ENCODE measurements at regions of chr6 and their contacts with region 1.

Region 1: GRCh38 chr6:30821862-30822782 is 62.2 kb upstream of the DDR1 start:
- DNase-seq: no peak
- H3K4me3 ChIP-seq: no peak overlapping the region
- H3K27ac ChIP-seq: peak overlapping the region; percentile 27 to 92 (median 84)
- H3K4me1 ChIP-seq: peaks cover 44 to 76% (median 57%) of the 10 kb centered on the region in 3 donors
- H3K27me3 ChIP-seq: no peaks in the 10 kb centered on the region
- CTCF ChIP-seq: peak; percentile 21 to 67 (median 44)
- POLR2A ChIP-seq: no peak

Region 2: DNA sequence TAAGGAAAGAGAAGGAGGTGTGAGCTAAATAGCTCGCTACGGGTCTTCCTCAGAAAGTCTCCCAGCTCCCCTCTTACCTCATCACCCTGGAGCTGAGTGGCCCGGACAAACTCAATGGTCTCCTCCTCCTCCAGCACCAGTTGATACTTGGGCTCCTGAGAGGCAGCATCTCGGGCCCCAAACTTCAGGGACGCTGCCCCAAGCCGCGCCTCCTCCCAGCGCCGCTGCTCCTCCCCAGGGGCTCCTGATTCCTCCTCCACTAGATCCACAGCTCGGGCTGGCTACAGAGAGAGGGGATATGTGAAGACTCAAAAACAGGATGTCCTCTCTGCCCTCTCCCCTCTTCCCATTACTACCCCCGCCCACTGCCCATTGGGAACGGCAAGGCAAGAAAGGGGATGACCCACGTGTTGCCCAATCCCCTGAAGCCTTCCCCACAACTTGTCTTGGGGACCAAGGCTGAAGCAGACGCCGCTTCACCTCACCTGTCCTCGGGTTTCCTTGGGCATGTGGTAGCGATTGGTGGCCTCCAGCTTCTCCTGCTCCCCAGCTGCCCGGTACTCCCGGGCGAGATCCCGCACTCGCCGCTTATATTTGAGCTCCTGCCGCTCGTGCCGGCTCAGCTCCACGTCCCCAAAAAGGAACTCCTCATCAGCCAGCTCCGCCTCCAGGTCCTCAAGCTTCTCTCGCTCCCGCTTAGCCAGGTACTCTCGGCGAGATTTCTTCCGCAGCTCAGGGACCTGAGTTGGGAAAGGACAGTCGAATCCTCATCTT is 156.9 kb before region 1 on chr6:
- intact Hi-C with region 1: no loop called
- DNase-seq: no peak
- H3K4me3 ChIP-seq: no peak overlapping the region
- H3K27ac ChIP-seq: no peak overlapping the region
- H3K4me1 ChIP-seq: no peaks in the 10 kb centered on the region
- H3K27me3 ChIP-seq: no peaks in the 10 kb centered on the region
- CTCF ChIP-seq: no peak
- POLR2A ChIP-seq: no peak

Region 3: GRCh38 chr6:30742316-30743098 is 79.6 kb before region 1 on chr6 and contains the start of gene FLOT1:
- intact Hi-C with region 1: loop called (anchors 5 kb)
- DNase-seq: peak; percentile 75
- H3K4me3 ChIP-seq: peak within 1 kb of the TSS; percentile 58 to 90 (median 82)
- H3K27ac ChIP-seq: peak within 1 kb of the TSS; percentile 92 to 99 (median 96)
- H3K4me1 ChIP-seq: peaks cover 18 to 79% (median 36%) of the 10 kb centered on the region in 3 donors
- H3K27me3 ChIP-seq: no peaks in the 10 kb centered on the region
- CTCF ChIP-seq: peak in 2 of 6 experiments; percentile 1 to 6
- POLR2A ChIP-seq: peak in 3 of 4 donors; percentile 37 to 74 (median 53)
- total RNA-seq, gene FLOT1: 46.7 to 88.8 (median 64.4) TPM